Dendritic cell treated with granulocyte-macrophage colony-stimulating factor and Interleukin-4, amounts not matched to agents 40 ng/mL and 50 ng/mL, for 4 days (primary cell): ENCODE measurements at regions of chr13 and their contacts with region 1.

Region 1: GRCh38 chr13:110915057-110915873 is at the start of gene ANKRD10:
- H3K4me3 Mint-ChIP-seq: peak within 1 kb of the TSS; percentile 89
- H3K27ac Mint-ChIP-seq: peak within 1 kb of the TSS; percentile 98
- H3K4me1 Mint-ChIP-seq: peaks cover 43% of the 10 kb centered on the region
- H3K27me3 Mint-ChIP-seq: peaks cover 6% of the 10 kb centered on the region

Region 2: DNA sequence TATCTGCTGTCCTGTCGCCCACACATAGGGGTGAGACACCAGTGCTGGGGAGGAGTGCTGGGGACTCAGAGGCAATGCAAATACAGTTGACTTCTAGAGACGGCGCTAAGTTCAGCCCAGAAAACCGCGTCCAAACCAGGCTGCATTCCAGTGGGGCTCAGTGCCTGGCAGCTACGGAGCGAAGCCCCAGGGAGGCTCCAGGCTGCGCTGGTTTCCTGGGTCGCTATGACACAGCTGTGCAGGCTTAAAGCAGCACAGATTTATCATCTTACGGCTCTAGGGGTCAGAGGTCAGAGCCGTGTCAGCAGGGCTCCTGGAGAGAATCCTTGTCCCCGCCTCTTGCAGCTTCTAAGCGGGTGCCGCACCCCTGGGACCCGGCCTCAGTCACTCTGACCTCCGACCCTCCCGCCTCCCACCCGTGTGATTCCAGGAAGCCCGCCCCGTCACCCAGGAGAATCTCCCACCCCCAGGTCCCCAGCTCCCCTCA is 62.0 kb before region 1 on chr13:
- intact Hi-C with region 1: no loop called
- H3K4me3 Mint-ChIP-seq: no peak overlapping the region
- H3K27ac Mint-ChIP-seq: no peak overlapping the region
- H3K4me1 Mint-ChIP-seq: no peaks in the 10 kb centered on the region
- H3K27me3 Mint-ChIP-seq: peaks cover 10% of the 10 kb centered on the region

Region 3: DNA sequence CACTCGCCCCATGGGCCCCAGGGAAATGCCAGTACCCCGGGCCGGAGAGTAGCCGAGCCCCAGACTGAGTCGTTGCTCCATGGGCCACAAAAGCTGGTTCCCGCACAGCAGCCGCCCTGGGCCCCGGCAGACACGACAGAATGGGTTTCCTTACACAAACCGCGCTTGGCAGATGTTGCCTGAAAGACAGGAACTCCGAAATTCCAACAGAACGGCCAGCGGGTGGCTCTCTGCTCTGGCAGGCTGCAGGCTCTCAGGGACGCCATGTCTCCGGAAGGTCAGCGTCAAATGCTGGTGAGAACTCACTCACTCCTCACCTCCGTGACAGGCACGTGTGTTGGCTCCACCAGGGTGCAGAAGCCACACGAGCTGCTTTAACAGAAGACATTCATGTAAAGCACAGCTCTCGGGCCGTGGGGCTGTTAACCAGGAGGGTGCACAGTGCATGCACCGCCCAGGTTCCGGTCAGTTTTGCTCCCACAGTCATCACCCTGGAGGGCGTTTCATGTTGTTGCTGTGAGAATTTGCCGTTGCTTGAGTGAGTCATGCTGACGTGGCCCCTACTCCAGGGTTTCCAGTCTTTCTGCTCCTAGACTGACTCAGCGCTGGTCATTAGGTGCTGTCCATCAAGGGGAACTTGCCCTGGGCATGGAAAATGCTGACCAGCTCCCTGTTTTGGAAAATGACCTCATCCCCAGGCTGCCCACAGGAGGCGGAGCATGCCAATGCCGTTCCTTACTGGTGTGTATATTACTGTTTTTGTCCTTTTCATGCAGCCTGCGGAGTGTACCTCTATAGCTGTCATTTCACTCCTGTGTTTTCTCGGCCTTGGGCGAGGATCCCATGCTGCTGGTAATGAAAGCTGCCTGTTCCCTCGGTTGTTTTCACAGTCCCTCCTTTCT is 45.2 kb before region 1 on chr13:
- intact Hi-C with region 1: loop called (anchors 2 kb)
- H3K4me3 Mint-ChIP-seq: peak overlapping the region; percentile 59
- H3K27ac Mint-ChIP-seq: peak overlapping the region; percentile 80
- H3K4me1 Mint-ChIP-seq: peaks cover 24% of the 10 kb centered on the region
- H3K27me3 Mint-ChIP-seq: peaks cover 35% of the 10 kb centered on the region

Region 4: DNA sequence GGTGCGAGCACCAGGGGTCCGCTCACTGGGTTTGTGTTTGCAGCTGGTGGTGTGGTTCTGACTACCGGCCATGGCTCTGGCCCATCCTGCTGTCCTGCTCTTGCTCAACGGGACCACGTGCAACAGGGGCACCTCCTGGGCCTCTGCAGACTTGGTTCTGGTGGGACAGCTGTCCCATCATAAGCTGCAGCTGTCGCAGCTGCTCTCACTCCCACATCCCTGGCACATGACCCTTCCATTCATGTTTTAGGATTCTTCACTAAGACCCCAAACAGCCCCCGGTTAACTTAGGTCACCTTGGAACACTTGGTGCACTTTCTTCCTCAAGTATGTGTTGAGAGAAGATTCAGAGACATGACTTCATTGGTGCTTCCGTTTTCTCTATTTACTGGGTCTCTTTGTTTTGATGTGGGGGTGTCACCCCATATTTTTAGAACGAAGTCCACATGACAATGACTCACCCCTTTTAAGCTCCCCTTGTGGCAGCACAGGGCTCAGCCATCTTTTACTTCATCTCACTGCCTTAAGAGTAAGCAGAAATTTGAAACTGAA is 131.4 kb after region 1 on chr13:
- intact Hi-C with region 1: loop called (anchors 5 kb)
- H3K4me3 Mint-ChIP-seq: no peak overlapping the region
- H3K27ac Mint-ChIP-seq: no peak overlapping the region
- H3K4me1 Mint-ChIP-seq: peaks cover 13% of the 10 kb centered on the region
- H3K27me3 Mint-ChIP-seq: peaks cover 4% of the 10 kb centered on the region

Region 5: DNA sequence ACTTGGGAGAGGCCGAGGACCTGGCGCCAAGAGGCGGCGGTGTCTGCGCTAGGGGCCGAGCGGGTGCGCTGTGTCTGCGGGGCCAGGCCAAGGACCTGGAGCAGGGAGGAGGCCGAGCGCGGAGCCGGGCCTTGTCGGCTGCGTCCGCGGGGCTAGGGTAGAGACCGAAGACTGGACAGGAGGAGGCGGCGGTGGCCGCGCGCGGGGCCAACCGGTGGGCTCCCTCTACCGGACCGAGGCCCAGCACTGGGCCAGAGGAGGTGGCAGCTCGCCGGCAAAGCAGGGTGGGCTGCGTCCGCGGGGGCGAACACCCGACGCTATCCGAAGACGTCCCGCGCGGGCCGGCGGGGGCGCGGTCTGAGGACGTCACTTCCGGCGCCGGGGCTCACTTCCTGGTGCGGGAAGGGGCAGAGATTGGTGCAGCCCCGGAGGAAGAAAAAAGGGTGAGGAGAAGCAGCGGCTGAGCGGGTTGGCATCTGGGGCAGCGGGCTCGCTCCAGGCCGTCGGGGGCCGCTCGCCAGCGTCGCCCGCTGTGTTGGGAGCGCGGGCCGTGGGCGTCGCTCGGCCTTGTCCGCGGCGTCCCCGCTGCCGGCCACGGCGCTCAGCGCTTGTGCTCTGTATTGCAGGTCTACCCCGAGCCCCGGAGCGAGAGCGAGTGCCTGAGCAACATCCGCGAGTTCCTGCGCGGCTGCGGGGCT is 238.2 kb after region 1 on chr13:
- intact Hi-C with region 1: loop called (anchors 1 kb)
- H3K4me3 Mint-ChIP-seq: peak overlapping the region; percentile 94
- H3K27ac Mint-ChIP-seq: peak overlapping the region; percentile 95
- H3K4me1 Mint-ChIP-seq: peaks cover 19% of the 10 kb centered on the region
- H3K27me3 Mint-ChIP-seq: peaks cover 25% of the 10 kb centered on the region

Region 6: GRCh38 chr13:111216166-111216960 is 301.1 kb after region 1 on chr13:
- intact Hi-C with region 1: loop called (anchors 10 kb)
- H3K4me3 Mint-ChIP-seq: no peak overlapping the region
- H3K27ac Mint-ChIP-seq: no peak overlapping the region
- H3K4me1 Mint-ChIP-seq: peaks cover 38% of the 10 kb centered on the region
- H3K27me3 Mint-ChIP-seq: no peaks in the 10 kb centered on the region

Region 7: DNA sequence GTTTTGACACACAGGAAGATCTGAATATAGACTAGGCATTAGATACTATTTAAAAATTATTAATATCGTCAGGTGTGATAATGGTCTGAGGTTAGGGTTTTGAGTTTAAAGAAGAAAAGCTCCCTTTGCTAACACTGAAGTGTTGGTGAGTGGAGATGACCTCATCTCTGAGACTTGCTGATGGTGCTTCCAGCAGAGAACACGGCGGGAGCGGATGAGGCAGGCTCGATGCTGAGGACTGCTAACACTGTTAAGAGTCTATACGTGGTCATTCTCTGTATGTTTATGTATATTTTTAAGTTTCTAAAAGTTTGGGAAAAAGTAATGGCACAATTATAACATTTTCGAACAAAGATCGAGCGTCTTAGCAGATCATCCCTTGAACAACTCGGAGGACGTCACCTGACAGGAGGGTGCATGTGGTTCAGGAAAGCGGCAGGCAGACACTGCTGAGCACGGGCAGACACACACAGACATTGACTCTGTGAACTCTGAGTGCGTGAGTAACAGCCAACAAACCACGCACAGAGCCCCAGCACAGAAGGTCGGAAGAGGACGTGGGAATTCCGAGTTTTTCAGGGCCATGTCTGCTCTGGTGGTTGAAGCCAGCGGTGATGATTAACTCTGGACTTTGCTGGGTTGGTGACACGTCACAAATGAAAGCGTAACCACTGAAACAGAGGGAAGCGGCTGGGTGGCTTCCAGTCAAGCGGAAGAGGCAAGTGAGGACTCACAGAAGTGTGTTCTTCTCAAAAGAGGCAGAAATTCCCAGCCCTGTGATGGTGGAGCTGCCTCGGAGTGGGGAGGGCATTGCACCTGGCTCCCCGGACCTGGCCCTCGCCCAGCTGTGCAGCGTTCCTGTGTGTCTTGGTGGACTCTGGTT is 313.2 kb after region 1 on chr13:
- intact Hi-C with region 1: no loop called
- H3K4me3 Mint-ChIP-seq: no peak overlapping the region
- H3K27ac Mint-ChIP-seq: no peak overlapping the region
- H3K4me1 Mint-ChIP-seq: no peaks in the 10 kb centered on the region
- H3K27me3 Mint-ChIP-seq: no peaks in the 10 kb centered on the region